Heart right ventricle (tissue), 16 donors: ENCODE measurements at regions of chr5 and their contacts with region 1.

Region 1: DNA sequence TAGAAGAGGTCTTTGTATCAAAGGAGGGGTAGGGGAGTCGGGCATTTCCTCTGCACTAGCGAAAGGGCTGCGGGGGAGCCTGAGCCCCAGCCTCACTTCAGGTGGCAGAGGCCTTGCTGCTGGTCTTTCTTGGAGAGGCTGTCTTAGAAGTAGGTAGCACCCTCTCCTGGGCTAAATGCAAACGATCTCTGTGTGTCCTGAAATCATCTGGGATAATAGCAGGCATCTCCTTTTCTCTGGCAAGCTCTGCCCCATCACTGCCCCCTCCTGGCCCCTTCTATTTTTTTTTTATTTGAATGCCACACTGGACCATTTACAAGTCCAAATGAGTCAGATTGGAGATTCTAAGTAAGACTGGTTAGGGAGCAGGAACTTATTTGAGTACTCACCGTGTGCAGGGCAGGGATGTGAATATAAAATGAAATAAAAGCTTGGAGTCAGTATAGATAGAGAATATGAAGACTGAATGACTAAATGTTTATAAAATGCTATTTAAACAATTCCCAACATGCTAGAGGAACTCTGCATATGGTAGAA is 137.1 kb downstream of the FGF1 start:
- DNase-seq: peak; percentile 23 to 76
- ATAC-seq: peak; percentile 82 to 92 (median 86)
- H3K4me3 ChIP-seq: no peak overlapping the region
- H3K27ac ChIP-seq: peak overlapping the region in 3 of 10 donors; percentile 7 to 14 (median 11)
- H3K4me1 ChIP-seq: peaks cover 2 to 69% (median 38%) of the 10 kb centered on the region in 9 donors
- H3K27me3 ChIP-seq: peaks cover 0 to 28% (median 0%) of the 10 kb centered on the region in 7 donors
- CTCF ChIP-seq: peak; percentile 58 to 91 (median 78)

Region 2: DNA sequence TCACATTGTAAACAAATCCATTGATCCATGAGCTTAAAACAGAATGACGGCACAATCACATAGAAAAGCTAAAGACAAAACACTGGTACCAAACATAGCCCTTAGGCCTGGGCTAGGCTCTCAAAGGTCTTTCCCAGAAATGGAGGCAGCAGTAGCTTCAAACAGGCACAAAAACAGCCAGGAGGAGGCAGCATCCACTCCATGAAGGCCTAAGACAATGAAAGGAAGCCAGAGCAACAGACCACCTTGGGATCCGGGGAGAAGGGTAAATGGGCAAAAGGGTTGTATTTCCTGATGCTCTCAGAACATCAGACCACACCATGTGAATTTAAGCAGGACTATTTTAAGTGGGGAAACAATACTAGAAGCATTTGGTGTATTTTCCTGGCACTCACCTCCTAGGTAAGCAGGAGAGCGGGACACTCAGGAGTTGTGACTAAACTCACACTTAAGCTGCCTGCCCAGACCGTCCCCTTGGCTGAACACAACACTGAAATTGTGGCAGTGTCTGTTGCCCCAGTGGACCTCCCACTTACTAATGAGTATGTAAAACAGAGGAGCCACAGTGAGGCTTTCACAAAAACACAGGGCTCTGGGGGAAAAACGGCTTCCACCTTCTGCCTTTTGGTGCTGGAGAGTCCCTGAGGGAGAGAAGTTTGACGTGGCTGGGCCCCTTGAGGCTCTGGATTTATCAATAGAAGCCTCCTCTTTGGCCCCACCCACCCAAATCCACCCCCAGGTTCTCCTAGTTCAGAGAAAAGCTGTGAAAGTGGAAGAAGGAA is 547.9 kb before region 1 on chr5:
- intact Hi-C with region 1: loop called in 1 of 10 experiments (anchors 10 kb)
- DNase-seq: no peak
- ATAC-seq: no peak
- H3K4me3 ChIP-seq: no peak overlapping the region
- H3K27ac ChIP-seq: peak overlapping the region in 2 of 10 donors; percentile 33 to 40
- H3K4me1 ChIP-seq: peaks cover 0 to 6% (median 0%) of the 10 kb centered on the region in 9 donors
- H3K27me3 ChIP-seq: no peaks in the 10 kb centered on the region
- CTCF ChIP-seq: peak in 6 of 9 donors; percentile 20 to 41 (median 35)

Region 3: DNA sequence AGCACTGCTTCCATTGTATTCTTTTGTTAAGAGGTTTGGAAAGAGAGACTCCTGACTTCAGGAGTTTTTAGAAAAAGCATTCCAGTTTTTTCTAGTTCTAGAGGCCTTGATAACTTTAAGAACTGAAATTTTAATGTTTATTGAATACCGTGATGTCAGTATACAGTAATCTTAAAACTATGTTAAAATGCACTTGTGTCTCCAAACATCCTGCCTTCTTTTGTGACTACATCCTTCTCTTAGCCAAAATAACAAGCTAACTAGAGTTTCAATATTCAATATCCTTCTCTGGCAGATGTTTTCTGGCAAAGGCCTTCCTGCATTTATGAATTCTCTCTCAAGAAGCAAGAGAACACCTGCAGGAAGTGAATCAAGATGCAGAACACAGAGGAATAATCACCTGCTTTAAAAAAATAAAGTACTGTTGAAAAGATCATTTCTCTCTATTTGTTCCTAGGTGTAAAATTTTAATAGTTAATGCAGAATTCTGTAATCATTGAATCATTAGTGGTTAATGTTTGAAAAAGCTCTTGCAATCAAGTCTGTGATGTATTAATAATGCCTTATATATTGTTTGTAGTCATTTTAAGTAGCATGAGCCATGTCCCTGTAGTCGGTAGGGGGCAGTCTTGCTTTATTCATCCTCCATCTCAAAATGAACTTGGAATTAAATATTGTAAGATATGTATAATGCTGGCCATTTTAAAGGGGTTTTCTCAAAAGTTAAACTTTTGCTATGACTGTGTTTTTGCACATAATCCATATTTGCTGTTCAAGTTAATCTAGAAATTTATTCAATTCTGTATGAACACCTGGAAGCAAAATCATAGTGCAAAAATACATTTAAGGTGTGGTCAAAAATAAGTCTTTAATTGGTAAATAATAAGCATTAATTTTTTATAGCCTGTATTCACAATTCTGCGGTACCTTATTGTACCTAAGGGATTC is 397.1 kb before region 1 on chr5:
- intact Hi-C with region 1: loop called (anchors 1 to 5 kb)
- DNase-seq: peak in 1 of 2 donors; percentile 80
- ATAC-seq: peak in 7 of 8 donors; percentile 59 to 75 (median 70)
- H3K4me3 ChIP-seq: no peak overlapping the region
- H3K27ac ChIP-seq: peak overlapping the region in 2 of 10 donors; percentile 16 to 24
- H3K4me1 ChIP-seq: peaks cover 0 to 12% (median 7%) of the 10 kb centered on the region in 9 donors
- H3K27me3 ChIP-seq: no peaks in the 10 kb centered on the region
- CTCF ChIP-seq: peak; percentile 79 to 93 (median 85)

Region 4: DNA sequence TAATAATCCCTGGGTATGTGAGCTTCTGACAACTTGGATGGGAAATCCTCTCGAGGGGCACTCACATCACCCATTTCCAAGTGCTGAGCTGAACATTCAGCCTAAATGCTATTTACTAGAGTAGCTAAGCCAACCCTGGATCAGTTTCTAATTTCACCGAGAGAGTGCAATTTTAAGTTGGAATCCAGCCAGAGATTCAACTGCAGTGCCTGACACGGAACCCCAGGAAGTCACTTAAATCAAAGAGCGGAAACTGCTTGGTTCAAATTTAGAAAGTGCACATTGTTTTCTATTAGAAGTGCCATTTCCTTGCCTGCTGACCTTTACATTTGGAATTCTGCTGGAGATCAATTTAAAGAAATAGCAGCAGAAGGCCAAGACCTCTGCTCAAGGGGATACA is 232.8 kb before region 1 on chr5:
- intact Hi-C with region 1: loop called in 8 of 10 experiments (anchors 5 to 10 kb)
- DNase-seq: peak in 1 of 2 donors; percentile 55
- ATAC-seq: peak in 7 of 8 donors; percentile 38 to 62 (median 43)
- H3K4me3 ChIP-seq: peak overlapping the region in 5 of 10 donors; percentile 3 to 25 (median 10)
- H3K27ac ChIP-seq: peak overlapping the region in 8 of 10 donors; percentile 46 to 95 (median 80)
- H3K4me1 ChIP-seq: peaks cover 27 to 100% (median 83%) of the 10 kb centered on the region in 9 donors
- H3K27me3 ChIP-seq: peaks cover 0 to 6% (median 0%) of the 10 kb centered on the region in 7 donors
- CTCF ChIP-seq: no peak

Region 5: GRCh38 chr5:142356716-142357473 is 191.9 kb before region 1 on chr5:
- intact Hi-C with region 1: loop called in 5 of 10 experiments (anchors 1 to 5 kb)
- DNase-seq: peak; percentile 86 to 90
- ATAC-seq: peak; percentile 90 to 95 (median 92)
- H3K4me3 ChIP-seq: peak overlapping the region; percentile 38 to 81 (median 66)
- H3K27ac ChIP-seq: peak overlapping the region; percentile 90 to 98 (median 96)
- H3K4me1 ChIP-seq: peaks cover 0 to 28% (median 18%) of the 10 kb centered on the region in 9 donors
- H3K27me3 ChIP-seq: peaks cover 0 to 65% (median 0%) of the 10 kb centered on the region in 7 donors
- CTCF ChIP-seq: peak in 2 of 9 donors; percentile 1 to 6

Region 6: DNA sequence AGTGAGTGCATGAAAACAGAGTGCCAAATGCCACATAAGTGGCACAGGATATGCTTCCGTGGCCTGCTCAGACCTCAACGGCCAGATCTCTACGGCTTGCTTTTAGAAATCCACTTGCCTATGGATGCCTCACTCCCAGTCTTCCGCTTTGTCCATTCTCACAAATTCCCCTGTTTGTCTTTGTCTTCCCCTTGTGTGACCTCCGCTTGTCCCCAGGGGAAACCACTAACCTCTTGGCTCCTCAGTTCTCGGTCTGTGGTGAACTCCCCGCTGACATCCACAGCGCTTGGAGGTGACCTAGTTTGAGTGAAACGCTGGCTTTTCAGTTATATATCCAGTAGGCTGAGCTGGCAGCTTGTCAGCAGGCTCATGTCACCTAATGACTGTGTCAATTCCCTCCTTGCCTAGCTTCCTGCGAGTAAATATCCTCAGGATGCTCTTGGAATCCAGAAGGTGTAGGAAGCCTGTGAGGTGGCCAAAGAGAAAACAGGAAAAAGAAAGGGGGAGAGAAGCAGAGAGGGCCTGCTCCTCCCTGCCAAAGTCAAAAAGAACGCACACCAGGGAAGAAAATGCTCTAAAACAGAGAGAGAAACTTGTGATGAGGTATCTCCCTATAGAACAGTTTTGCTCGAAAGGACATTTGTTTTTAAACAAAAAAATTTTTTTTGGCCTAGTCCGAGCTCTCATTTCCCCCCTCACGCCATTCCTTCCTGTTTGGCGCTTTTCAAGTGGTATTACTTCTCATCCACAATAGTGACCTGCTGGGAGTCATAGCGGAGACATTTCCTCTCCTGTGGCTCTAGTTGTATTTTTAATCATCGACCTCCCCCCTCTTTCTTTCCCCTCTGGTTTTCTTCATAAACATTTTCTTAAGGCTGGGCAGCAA is 122.4 kb before region 1 on chr5:
- intact Hi-C with region 1: loop called in 8 of 10 experiments (anchors 5 to 10 kb)
- DNase-seq: peak; percentile 60 to 85
- ATAC-seq: peak; percentile 67 to 84 (median 78)
- H3K4me3 ChIP-seq: peak overlapping the region in 1 of 10 donors; percentile 18
- H3K27ac ChIP-seq: peak overlapping the region in 9 of 10 donors; percentile 35 to 76 (median 64)
- H3K4me1 ChIP-seq: peaks cover 5 to 55% (median 33%) of the 10 kb centered on the region in 9 donors
- H3K27me3 ChIP-seq: no peaks in the 10 kb centered on the region
- CTCF ChIP-seq: no peak